ENCODE measurements at regions of chr2 and their contacts with region 1.

Region 1: GRCh38 chr2:26605195-26605998 is 35.8 kb downstream of the CIB4 start:
- DNase-seq: peak; percentile 73 to 78
- ATAC-seq: peak; percentile 79 to 93
- H3K4me3 ChIP-seq: no peak overlapping the region
- H3K27ac ChIP-seq: peak overlapping the region; percentile 57 to 80; a peak in 5 of 6 replicates
- H3K4me1 ChIP-seq: peaks cover 21% of the 10 kb centered on the region
- CTCF ChIP-seq: peak; percentile 97
- EP300 ChIP-seq: no peak
- POLR2A ChIP-seq: no peak
- RAD21 ChIP-seq: peak; percentile 99

Region 2: GRCh38 chr2:26345545-26346453 is 259.6 kb before region 1 on chr2 and contains the start of gene SELENOI:
- CTCF ChIA-PET with region 1: no interaction called
- POLR2A ChIA-PET with region 1: no interaction called
- DNase-seq: peak; percentile 91 to 100
- ATAC-seq: peak; percentile 93 to 97
- H3K4me3 ChIP-seq: peak within 1 kb of the TSS; percentile 76
- H3K27ac ChIP-seq: peak within 1 kb of the TSS; percentile 88 to 95
- H3K4me1 ChIP-seq: peaks cover 39% of the 10 kb centered on the region
- CTCF ChIP-seq: no peak
- EP300 ChIP-seq: no peak
- POLR2A ChIP-seq: peak; percentile 98
- RAD21 ChIP-seq: peak in 1 of 2 experiments; percentile 25; a peak in 1 of 5 replicates
- polyA plus RNA-seq, gene SELENOI: 30.5 and 38.7 TPM in 2 replicates

Region 3: GRCh38 chr2:26422947-26423629 is 182.3 kb before region 1 on chr2:
- CTCF ChIA-PET with region 1: no interaction called
- POLR2A ChIA-PET with region 1: no interaction called
- DNase-seq: no peak
- ATAC-seq: 0 out of 6 replicates have a peak, but pooled peaks of 1 of the 2 experiments have one; percentile 33
- H3K4me3 ChIP-seq: no peak overlapping the region
- H3K27ac ChIP-seq: no peak overlapping the region
- H3K4me1 ChIP-seq: no peaks in the 10 kb centered on the region
- CTCF ChIP-seq: no peak
- EP300 ChIP-seq: no peak
- POLR2A ChIP-seq: no peak
- RAD21 ChIP-seq: no peak

Region 4: DNA sequence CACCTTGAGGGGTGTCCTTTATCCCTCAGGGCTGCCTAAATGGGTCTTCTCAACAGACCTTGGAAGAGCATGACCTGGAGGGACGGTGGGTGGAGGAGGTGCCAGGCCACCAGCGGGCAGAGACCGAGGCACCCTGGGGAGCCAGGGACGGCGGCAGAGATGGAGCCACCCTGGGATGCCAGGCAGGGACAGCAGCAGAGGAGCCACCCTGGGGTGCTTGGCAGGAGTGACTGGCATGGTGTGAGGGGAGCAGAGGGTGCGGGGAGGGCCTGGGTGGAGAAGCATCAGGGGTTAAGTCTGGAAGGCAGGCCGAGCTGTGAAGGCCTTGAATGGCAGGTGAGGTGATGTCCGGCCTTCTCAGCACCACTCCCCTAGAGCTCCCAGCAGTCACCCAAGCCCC is 20.3 kb before region 1 on chr2:
- CTCF ChIA-PET with region 1: interaction called, 104 read pairs
- POLR2A ChIA-PET with region 1: no interaction called
- DNase-seq: no peak
- ATAC-seq: 0 out of 6 replicates have a peak, but pooled peaks of 1 of the 2 experiments have one; percentile 3
- H3K4me3 ChIP-seq: no peak overlapping the region
- H3K27ac ChIP-seq: no peak overlapping the region
- H3K4me1 ChIP-seq: no peaks in the 10 kb centered on the region
- CTCF ChIP-seq: no peak
- EP300 ChIP-seq: no peak
- POLR2A ChIP-seq: no peak
- RAD21 ChIP-seq: no peak

Region 5: GRCh38 chr2:26630669-26631360 is 25.4 kb after region 1 on chr2:
- CTCF ChIA-PET with region 1: interaction called, 22 read pairs
- POLR2A ChIA-PET with region 1: no interaction called
- DNase-seq: peak; percentile 64 to 79
- ATAC-seq: peak; percentile 81 to 90
- H3K4me3 ChIP-seq: no peak overlapping the region
- H3K27ac ChIP-seq: peak overlapping the region in 1 of 2 experiments; percentile 61; a peak in 3 of 6 replicates
- H3K4me1 ChIP-seq: peaks cover 11% of the 10 kb centered on the region
- CTCF ChIP-seq: no peak
- EP300 ChIP-seq: no peak
- POLR2A ChIP-seq: no peak
- RAD21 ChIP-seq: no peak

Region 6: GRCh38 chr2:26685989-26686839 is 80.8 kb after region 1 on chr2:
- CTCF ChIA-PET with region 1: interaction called, 34 read pairs
- POLR2A ChIA-PET with region 1: no interaction called
- DNase-seq: no peak
- ATAC-seq: peak in 1 of 2 experiments; percentile 27; a peak in 3 of 6 replicates
- H3K4me3 ChIP-seq: no peak overlapping the region
- H3K27ac ChIP-seq: no peak overlapping the region
- H3K4me1 ChIP-seq: peaks cover 6% of the 10 kb centered on the region; the same call in 1 of the 3 replicates
- CTCF ChIP-seq: no peak
- EP300 ChIP-seq: no peak
- POLR2A ChIP-seq: no peak
- RAD21 ChIP-seq: no peak

Region 7: DNA sequence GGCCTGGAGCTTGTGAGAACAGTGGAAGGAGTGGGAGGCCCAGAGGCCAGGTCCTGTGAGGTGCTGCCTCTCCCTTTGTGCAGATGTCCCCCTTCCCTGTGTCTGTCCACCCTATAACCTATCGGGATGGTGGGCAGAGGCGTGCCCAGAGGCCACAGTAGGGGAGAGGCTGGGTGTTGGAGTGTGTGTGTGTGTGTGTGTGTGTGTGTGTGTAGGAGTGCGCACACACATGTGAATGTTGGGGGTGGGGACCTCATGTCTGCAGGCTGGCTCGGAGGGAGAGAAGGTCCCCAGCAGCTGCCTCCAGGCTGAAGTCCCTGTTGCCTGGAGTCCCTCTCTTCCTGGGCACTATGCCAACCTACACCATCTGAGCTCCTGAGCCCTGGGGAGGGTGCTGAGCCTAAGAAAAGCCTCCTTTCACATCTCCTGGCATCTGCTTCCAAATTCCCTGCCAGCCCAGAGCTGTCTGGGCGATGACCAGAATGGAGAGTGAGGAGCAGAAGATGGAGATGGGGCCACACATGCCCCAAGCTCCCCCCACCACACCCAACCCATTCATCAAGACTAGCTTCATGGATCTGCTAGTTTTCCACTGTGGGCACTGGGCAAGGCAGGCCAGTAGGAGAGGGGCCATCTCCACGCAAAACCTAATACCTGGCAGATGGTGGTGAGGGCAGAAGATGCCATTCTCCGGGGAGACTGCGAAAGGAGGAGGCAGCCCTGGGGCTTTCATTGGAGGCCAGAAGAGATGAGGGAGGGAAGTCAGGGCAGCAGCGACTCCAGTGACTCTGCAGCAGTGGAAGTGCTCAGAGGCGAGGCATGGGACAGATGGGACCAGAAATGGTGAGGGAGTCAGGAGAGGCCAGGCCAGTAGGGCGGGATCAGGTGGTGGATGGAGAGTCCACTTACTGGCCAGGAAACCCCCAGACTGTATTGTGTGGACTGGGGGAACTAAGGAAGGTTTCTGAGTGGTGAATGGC is 107.4 kb after region 1 on chr2:
- CTCF ChIA-PET with region 1: interaction called, 38 read pairs
- POLR2A ChIA-PET with region 1: no interaction called
- DNase-seq: no peak
- ATAC-seq: peak; percentile 18 to 24; a peak in 3 of 6 replicates
- H3K4me3 ChIP-seq: no peak overlapping the region
- H3K27ac ChIP-seq: peak overlapping the region in 1 of 2 experiments; percentile 94; a peak in 4 of 6 replicates
- H3K4me1 ChIP-seq: peaks cover 35% of the 10 kb centered on the region
- CTCF ChIP-seq: no peak
- EP300 ChIP-seq: no peak
- POLR2A ChIP-seq: no peak
- RAD21 ChIP-seq: no peak

Region 8: DNA sequence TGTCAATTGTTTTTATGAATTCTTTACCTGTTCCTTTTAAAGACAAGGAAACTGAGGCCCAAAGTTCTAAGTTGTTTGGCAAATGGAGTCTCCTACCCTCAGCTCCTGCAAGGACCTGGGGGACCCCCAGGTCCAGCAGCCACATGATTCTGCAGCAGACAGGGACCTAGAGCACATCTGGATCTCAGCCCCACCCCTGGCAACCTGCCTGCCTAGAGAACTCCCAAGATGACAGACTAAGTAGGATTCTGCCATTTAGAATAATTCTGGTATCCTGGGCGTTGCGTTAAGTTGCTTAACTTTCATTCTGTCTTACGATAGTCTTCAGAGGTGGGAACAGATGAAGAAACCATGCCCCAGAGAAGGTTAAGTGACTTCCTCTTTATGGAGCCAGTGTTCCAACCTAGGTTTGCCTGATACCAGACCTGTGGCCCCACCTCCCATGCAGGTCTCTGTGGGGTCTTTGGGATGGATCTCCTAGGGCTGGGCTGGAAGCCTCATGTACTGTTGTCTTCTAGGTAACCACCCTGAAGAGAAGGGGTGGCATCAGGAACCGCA is 174.9 kb after region 1 on chr2:
- CTCF ChIA-PET with region 1: interaction called, 10 read pairs
- POLR2A ChIA-PET with region 1: no interaction called
- DNase-seq: no peak
- ATAC-seq: no peak
- H3K4me3 ChIP-seq: no peak overlapping the region
- H3K27ac ChIP-seq: peak overlapping the region in 1 of 2 experiments; percentile 1; a peak in 1 of 6 replicates
- H3K4me1 ChIP-seq: peaks cover 8% of the 10 kb centered on the region; the same call in 1 of the 3 replicates
- CTCF ChIP-seq: no peak
- EP300 ChIP-seq: no peak
- POLR2A ChIP-seq: no peak
- RAD21 ChIP-seq: no peak

Measured in A549 (cell line).